ENCODE measurements at regions of chr2 and their contacts with region 1.

Region 1: DNA sequence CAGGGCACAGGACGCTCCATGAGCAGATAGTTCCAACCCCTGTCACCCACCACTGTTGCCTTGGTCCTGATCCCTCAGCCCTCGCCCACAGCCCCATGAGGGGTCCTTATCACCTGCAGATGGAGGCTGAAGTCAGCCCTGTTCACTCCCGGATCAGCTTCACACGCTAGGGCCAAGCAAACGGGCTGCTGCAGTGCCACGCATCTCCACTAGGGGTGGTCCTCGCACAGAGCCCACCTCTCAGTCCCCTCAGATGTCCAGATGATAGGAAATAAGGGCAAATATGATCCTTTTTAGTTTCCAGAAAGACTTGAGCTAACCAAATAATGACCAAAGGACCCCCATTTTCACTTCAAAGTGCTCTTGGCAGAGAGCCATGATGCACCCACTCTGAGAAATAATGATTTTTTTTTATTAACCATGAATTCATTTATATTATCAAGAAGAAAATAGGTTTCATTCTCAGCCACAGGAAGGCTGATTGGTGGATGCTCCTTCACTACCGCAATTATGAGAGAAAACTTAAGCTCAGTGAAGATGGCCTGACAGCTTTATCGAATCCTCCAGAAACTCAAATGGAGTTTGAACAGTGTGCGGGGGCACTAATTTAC is 71.9 kb upstream of the KLHL29 start:
- DNase-seq: peak; percentile 55
- H3K4me3 ChIP-seq: no peak overlapping the region
- H3K27ac ChIP-seq: no peak overlapping the region
- H3K4me1 ChIP-seq: no peaks in the 10 kb centered on the region
- H3K27me3 ChIP-seq: peaks cover 23% of the 10 kb centered on the region
- CTCF ChIP-seq: peak; percentile 93

Region 2: GRCh38 chr2:23301136-23301535 is 12.0 kb before region 1 on chr2:
- CTCF ChIA-PET with region 1: interaction called, 11 read pairs
- POLR2A ChIA-PET with region 1: no interaction called
- intact Hi-C with region 1: no loop called
- DNase-seq: no peak
- H3K4me3 ChIP-seq: no peak overlapping the region
- H3K27ac ChIP-seq: no peak overlapping the region
- H3K4me1 ChIP-seq: peaks cover 4% of the 10 kb centered on the region
- H3K27me3 ChIP-seq: peaks cover 30% of the 10 kb centered on the region
- CTCF ChIP-seq: no peak

Region 3: GRCh38 chr2:23404426-23404825 is 91.3 kb after region 1 on chr2:
- CTCF ChIA-PET with region 1: no interaction called
- POLR2A ChIA-PET with region 1: no interaction called
- intact Hi-C with region 1: no loop called
- DNase-seq: peak; percentile 92
- H3K4me3 ChIP-seq: peak overlapping the region; percentile 32
- H3K27ac ChIP-seq: peak overlapping the region; percentile 51
- H3K4me1 ChIP-seq: peaks cover 20% of the 10 kb centered on the region
- H3K27me3 ChIP-seq: no peaks in the 10 kb centered on the region
- CTCF ChIP-seq: peak; percentile 61